ENCODE measurements at regions of chr7 and their contacts with region 1.

Region 1: GRCh38 chr7:16564909-16565426 is 38.3 kb downstream of the LRRC72 start:
- DNase-seq: peak; percentile 66
- ATAC-seq: peak; percentile 90
- H3K4me3 ChIP-seq: no peak overlapping the region
- H3K27ac ChIP-seq: no peak overlapping the region
- H3K4me1 ChIP-seq: no peaks in the 10 kb centered on the region; a peak in 1 of 4 replicates
- H3K27me3 ChIP-seq: no peaks in the 10 kb centered on the region
- CTCF ChIP-seq: peak; percentile 62 to 83 (median 81)
- POLR2A ChIP-seq: no peak
- RAD21 ChIP-seq: peak; percentile 96

Region 2: DNA sequence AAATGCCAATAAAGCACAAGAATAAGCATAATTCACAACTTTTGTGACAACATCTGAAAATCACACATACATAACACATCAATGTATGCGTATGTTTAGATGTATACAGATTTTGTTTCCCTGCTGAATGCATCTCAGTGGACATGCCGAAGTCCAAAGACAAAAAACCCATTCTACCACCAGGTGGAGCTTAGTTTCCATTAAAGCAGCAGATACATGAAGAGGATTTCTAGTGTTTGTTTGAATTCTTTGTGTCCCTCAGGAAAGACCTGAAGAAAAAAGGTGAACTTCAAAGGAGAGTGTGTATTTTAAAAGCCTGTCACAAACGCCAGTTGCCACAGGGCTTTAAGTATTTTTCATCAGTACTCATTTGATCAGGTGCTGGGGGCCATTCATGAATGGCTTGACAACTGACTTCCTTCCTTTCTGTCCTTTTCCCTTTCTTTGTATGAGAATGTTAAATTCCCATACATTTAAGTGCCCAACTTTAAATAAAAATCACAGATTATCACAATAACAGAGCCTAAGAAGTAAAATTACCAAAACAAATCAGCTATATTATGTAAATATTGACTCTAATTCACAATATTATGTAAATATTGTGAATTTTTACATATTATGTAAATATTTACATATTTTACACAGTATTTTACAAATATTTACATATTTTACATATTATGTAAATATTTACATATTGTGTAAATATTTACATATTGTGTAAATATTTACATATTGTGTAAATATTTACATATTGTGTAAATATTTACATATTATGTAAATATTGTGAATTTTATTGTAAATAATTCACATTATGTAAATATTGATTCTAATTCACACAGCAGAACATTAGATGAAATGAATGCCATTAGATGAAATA is 486.7 kb before region 1 on chr7:
- CTCF ChIA-PET with region 1: interaction called, 6 read pairs
- POLR2A ChIA-PET with region 1: no interaction called
- RAD21 ChIA-PET with region 1: interaction called in 1 of 2 experiments, 5 read pairs
- intact Hi-C with region 1: loop called (anchors 2 kb)
- DNase-seq: peak; percentile 69
- ATAC-seq: peak; percentile 88
- H3K4me3 ChIP-seq: no peak overlapping the region
- H3K27ac ChIP-seq: peak overlapping the region; percentile 27; the same call in 1 of the 2 replicates
- H3K4me1 ChIP-seq: peaks cover 4 to 11% of the 10 kb centered on the region in 2 experiments
- H3K27me3 ChIP-seq: no peaks in the 10 kb centered on the region
- CTCF ChIP-seq: peak; percentile 51 to 78 (median 58); a peak in 5 of 6 replicates
- POLR2A ChIP-seq: no peak
- RAD21 ChIP-seq: peak; percentile 82

Region 3: GRCh38 chr7:16114633-16115032 is 450.3 kb before region 1 on chr7:
- CTCF ChIA-PET with region 1: interaction called, 20 read pairs
- POLR2A ChIA-PET with region 1: no interaction called
- RAD21 ChIA-PET with region 1: interaction called in 1 of 2 experiments, 5 read pairs
- intact Hi-C with region 1: loop called (anchors 1 kb)
- DNase-seq: peak; percentile 52
- ATAC-seq: peak; percentile 59; the same call in 1 of the 2 replicates
- H3K4me3 ChIP-seq: no peak overlapping the region
- H3K27ac ChIP-seq: no peak overlapping the region
- H3K4me1 ChIP-seq: no peaks in the 10 kb centered on the region
- H3K27me3 ChIP-seq: no peaks in the 10 kb centered on the region
- CTCF ChIP-seq: peak; percentile 24 to 54 (median 54); a peak in 4 of 6 replicates
- POLR2A ChIP-seq: no peak
- RAD21 ChIP-seq: peak; percentile 88

Region 4: GRCh38 chr7:16431646-16432424 is 133.1 kb before region 1 on chr7:
- CTCF ChIA-PET with region 1: interaction called, 74 read pairs
- POLR2A ChIA-PET with region 1: interaction called, 4 read pairs
- RAD21 ChIA-PET with region 1: interaction called, 6 to 13 read pairs
- intact Hi-C with region 1: loop called (anchors 1 kb)
- DNase-seq: peak; percentile 54
- ATAC-seq: peak; percentile 96
- H3K4me3 ChIP-seq: no peak overlapping the region
- H3K27ac ChIP-seq: no peak overlapping the region
- H3K4me1 ChIP-seq: peaks cover 0 to 6% of the 10 kb centered on the region in 2 experiments; a peak in 2 of 4 replicates
- H3K27me3 ChIP-seq: no peaks in the 10 kb centered on the region
- CTCF ChIP-seq: peak; percentile 51 to 86 (median 72)
- POLR2A ChIP-seq: no peak
- RAD21 ChIP-seq: peak; percentile 79

Region 5: DNA sequence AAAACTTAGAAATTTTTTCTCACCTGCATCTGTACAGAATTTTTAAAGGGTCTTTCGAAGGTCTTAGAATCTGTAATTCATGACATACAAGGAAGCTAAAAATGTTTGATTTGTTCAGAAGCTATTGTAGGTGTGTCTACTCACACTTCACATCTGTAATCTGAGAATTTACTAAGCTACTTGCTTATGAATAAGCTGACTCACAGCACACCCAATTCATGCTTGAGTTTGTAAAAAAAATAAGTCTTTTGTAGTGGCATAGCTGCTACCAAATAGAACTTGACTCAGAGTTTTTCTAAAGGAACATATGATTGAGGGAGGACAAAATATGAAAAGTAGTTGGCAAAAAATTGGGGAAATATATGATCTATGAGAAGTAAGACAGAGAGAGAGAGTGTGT is 252.6 kb after region 1 on chr7:
- CTCF ChIA-PET with region 1: no interaction called
- POLR2A ChIA-PET with region 1: no interaction called
- RAD21 ChIA-PET with region 1: no interaction called
- intact Hi-C with region 1: no loop called
- DNase-seq: no peak
- ATAC-seq: peak; percentile 30; the same call in 1 of the 2 replicates
- H3K4me3 ChIP-seq: no peak overlapping the region
- H3K27ac ChIP-seq: no peak overlapping the region
- H3K4me1 ChIP-seq: peaks cover 0 to 9% of the 10 kb centered on the region in 2 experiments; a peak in 2 of 4 replicates
- H3K27me3 ChIP-seq: no peaks in the 10 kb centered on the region
- CTCF ChIP-seq: no peak
- POLR2A ChIP-seq: no peak
- RAD21 ChIP-seq: no peak